Common myeloid progenitor, CD34-positive (primary cell): ENCODE measurements at regions of chr17 and their contacts with region 1.

Region 1: DNA sequence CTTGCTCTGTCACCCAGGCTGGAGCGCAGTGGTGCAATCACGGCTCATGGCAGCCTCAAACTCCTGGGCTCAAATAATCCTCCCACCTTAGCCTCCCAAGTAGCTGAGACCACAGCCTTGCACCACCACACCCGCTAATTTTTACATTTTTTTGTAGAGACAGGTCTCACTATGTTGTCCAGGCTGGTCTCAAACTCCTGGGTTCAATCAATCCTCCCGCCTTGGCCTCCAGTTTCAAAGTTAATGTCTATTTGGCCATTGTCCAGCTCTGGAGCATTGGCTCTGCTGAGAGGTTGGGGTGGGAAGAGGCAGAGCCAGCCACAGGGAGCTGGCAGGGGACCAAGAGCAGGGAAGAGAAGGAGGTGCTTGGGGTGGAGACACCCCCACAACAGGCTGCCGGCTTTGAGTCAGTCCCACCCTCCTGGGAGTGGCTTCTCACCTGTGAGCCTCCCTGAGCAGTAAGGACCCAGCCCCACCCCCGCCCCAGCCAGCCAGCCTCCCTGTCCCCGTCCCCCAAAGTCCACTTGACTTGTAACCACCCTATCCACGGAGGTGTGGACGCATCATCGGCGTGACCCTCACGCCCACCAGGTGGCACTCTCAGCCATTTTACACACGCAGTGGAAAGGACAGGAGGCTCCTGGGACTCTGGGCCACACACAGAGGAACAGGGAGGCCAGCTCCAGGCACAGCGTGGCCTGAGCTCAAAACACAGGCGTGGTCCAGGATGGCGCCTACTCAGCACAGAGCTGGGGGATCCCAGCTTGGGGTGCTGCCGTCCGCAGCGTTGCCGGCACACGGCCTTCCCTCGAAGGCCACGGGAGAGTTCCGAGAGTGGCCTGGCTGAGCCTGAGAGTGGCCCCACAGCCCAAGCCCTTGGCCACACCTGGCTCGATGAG is 22.8 kb upstream of the PVALEF start:
- DNase-seq: peak; percentile 73 to 85 (median 81)
- H3K4me3 ChIP-seq: no peak overlapping the region
- H3K27ac ChIP-seq: no peak overlapping the region
- H3K4me1 ChIP-seq: peaks cover 0 to 3% (median 1%) of the 10 kb centered on the region in 4 experiments
- H3K27me3 ChIP-seq: no peaks in the 10 kb centered on the region

Region 2: DNA sequence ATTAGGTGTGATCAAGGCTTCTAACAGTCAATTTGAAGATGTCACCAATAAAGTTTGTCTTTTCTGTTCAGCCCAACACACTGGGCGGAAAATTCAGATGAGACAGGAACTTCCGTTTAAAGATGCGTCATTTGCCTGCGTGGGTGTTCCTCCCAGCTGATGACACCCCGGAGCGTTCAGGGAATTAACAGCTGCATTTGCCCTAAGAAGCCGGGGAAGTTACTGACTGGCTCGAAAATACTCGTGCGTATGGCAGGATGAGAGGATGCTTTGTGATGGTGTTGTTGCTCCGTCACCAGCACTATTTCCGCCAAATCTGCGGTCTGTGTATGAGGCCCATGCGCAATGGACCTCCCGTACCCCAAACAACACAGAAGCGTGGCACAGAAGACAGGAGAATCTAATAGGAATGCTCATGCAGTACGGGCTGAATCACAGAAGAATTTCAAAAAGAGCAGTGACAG is 10.8 kb after region 1 on chr17:
- CTCF ChIA-PET with region 1: interaction called, 18 read pairs
- POLR2A ChIA-PET with region 1: no interaction called
- DNase-seq: no peak
- H3K4me3 ChIP-seq: no peak overlapping the region
- H3K27ac ChIP-seq: no peak overlapping the region
- H3K4me1 ChIP-seq: peaks cover 0 to 19% (median 17%) of the 10 kb centered on the region in 4 experiments
- H3K27me3 ChIP-seq: no peaks in the 10 kb centered on the region

Region 3: GRCh38 chr17:81179220-81179619 is 36.7 kb after region 1 on chr17:
- CTCF ChIA-PET with region 1: interaction called, 11 read pairs
- POLR2A ChIA-PET with region 1: no interaction called
- DNase-seq: no peak
- H3K4me3 ChIP-seq: no peak overlapping the region
- H3K27ac ChIP-seq: no peak overlapping the region
- H3K4me1 ChIP-seq: no peaks in the 10 kb centered on the region
- H3K27me3 ChIP-seq: peaks cover 0 to 10% (median 0%) of the 10 kb centered on the region in 5 experiments

Region 4: DNA sequence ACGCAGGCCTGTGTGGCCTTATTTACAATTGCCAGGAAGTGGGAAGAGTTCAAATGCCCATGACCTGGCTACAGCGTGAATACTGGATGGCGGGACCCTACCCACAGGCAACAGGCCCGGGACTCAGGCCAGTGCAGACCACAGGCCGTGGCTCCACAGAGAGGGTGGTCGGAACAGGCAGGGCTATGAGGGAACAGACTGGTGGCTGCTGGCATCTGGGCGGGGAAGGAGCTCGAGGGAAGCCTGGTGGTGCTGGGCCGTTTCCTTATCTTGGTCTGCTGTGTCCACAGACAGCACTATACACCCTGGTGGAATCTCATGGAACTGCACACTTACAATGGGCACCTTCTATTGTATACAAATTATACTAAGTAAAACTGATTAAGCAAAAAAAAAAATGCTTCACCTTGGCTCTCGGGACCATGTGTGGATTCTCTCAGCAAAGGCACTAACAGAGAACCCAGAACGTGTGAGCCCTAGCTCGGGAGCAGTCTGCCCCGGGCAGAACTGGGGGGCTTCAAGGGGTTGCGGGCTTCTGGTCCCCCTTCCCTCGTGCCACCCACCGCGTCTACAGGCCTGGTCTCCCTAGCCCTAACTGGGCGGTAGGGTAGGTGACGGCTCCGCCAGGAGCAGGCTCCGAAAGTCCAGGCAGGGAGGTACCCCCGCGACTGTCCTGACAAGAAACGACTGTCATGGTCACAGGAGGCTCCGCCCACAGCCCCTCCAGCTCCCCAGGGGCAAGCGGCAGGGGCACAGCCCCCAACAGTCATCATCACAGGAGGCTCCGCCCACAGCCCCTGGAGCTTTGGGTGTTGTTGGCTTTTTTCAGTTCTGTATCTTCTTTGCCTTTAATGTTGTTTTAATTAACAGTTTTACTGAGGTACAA is 58.4 kb after region 1 on chr17:
- CTCF ChIA-PET with region 1: interaction called, 60 read pairs
- POLR2A ChIA-PET with region 1: no interaction called
- DNase-seq: peak; percentile 84 to 94 (median 91)
- H3K4me3 ChIP-seq: no peak overlapping the region
- H3K27ac ChIP-seq: peak overlapping the region in 1 of 2 experiments; percentile 16
- H3K4me1 ChIP-seq: peaks cover 0 to 12% (median 4%) of the 10 kb centered on the region in 4 experiments
- H3K27me3 ChIP-seq: no peaks in the 10 kb centered on the region

Region 5: GRCh38 chr17:81210868-81211267 is 68.3 kb after region 1 on chr17:
- CTCF ChIA-PET with region 1: interaction called, 10 read pairs
- POLR2A ChIA-PET with region 1: no interaction called
- DNase-seq: peak in 2 of 3 donors; percentile 20 to 31
- H3K4me3 ChIP-seq: peak overlapping the region in 3 of 7 experiments; percentile 19 to 52 (median 23)
- H3K27ac ChIP-seq: no peak overlapping the region
- H3K4me1 ChIP-seq: peaks cover 0 to 24% (median 14%) of the 10 kb centered on the region in 4 experiments
- H3K27me3 ChIP-seq: no peaks in the 10 kb centered on the region

Region 6: DNA sequence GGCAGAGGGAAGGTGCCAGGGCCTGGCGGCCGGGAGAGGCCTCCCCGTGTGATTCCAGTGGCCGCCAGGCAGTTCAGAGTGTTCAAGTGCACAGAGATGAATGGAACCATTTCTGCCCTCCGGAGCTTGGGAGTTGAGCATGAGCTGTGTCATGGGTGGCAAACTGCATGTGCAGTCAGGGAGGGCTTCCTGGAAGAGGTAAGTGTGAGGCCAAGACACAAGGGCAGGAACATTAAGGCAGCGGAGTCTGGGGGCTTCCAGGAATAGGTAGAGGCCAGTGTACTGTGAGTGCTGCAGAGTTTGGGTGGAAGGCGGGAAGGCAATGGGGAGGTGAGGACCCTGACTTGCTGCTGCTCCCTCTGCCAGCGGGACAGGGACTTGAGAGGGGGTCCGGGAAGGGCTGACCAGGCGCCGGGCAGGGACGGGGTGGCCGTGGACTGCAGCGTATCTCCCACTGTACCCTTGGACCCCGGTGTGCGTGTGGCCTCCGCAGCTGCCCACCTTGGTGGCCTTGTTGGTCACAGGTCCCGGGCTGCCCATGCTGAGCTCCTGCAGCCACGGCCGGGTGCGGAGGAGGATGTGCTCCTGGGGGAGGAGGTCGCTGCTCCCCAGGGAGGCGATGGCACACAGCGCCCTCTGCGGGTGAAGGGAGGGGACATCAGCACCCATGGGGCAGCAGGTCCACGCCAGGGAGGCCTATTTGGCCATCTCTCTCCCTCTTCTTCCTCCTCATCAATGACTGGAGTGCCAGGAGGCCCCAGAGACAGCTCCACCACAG is 87.7 kb after region 1 on chr17:
- CTCF ChIA-PET with region 1: interaction called, 22 read pairs
- POLR2A ChIA-PET with region 1: no interaction called
- DNase-seq: no peak
- H3K4me3 ChIP-seq: no peak overlapping the region
- H3K27ac ChIP-seq: no peak overlapping the region
- H3K4me1 ChIP-seq: peaks cover 0 to 19% (median 12%) of the 10 kb centered on the region in 4 experiments
- H3K27me3 ChIP-seq: no peaks in the 10 kb centered on the region

Region 7: GRCh38 chr17:81241648-81242420 is 99.3 kb after region 1 on chr17:
- CTCF ChIA-PET with region 1: interaction called, 11 read pairs
- POLR2A ChIA-PET with region 1: interaction called, 4 read pairs
- DNase-seq: peak; percentile 50 to 77 (median 76)
- H3K4me3 ChIP-seq: no peak overlapping the region
- H3K27ac ChIP-seq: no peak overlapping the region
- H3K4me1 ChIP-seq: peaks cover 6 to 47% (median 38%) of the 10 kb centered on the region in 4 experiments
- H3K27me3 ChIP-seq: no peaks in the 10 kb centered on the region

Region 8: DNA sequence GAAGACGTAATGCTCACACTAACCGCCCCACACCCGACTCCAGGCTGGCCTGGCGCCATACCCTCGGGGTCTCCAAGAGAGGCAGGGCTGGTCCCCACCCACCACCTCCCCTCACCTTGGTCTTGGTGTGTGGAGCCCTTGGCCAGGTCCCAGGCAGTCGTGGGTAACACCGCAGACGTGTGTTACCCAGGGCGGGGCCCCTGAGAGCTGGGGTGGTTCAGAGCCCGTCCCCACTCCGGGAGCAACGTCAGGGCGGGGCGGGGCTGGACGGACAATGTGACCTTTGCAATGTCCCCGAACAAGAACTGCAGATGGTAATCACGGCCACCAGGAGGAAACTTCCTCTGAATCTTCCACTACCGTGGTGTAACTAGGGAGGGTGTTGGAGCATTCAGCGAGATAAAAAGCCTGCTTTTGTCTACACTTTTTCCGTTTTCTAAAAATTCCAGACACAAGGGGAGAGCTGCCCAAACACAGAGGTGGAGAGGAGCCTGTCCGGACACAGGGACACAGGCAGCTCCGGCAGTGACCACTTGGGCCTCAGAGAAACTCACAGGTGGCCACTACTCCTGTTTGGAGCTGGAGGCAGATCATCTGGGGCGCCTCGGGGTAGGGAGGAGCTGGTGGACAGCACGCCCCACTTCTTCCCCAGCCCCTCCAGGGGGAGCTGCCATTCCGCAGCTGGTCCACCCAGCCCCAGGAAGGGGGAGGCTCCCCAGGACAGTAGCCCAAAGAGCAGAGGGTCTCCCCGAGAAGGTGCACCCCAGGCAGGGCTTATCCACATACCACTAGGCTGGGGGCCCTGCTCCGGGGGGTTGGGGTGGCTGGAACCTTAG is 166.7 kb after region 1 on chr17:
- CTCF ChIA-PET with region 1: no interaction called
- POLR2A ChIA-PET with region 1: no interaction called
- DNase-seq: peak; percentile 70 to 84 (median 78)
- H3K4me3 ChIP-seq: peak overlapping the region in 3 of 7 experiments; percentile 5 to 54 (median 44)
- H3K27ac ChIP-seq: peak overlapping the region in 1 of 2 experiments; percentile 49
- H3K4me1 ChIP-seq: peaks cover 0 to 12% (median 11%) of the 10 kb centered on the region in 4 experiments
- H3K27me3 ChIP-seq: no peaks in the 10 kb centered on the region